Head of caudate nucleus (tissue), 42 donors: ENCODE measurements at regions of chr15 and their contacts with region 1.

Region 1: GRCh38 chr15:85116925-85117680 is 135.4 kb downstream of the PDE8A start:
- DNase-seq: peak in 2 of 42 donors; percentile 5 to 43

Region 2: GRCh38 chr15:84947947-84948830 is 168.9 kb before region 1 on chr15:
- intact Hi-C with region 1: loop called (anchors 5 kb)
- DNase-seq: peak in 5 of 42 donors; percentile 20 to 70 (median 25)